PC-9 (cell line): ENCODE measurements at regions of chr20 and their contacts with region 1.

Region 1: GRCh38 chr20:62793912-62794724 is 2.2 kb upstream of the MRGBP start:
- DNase-seq: peak; percentile 80 to 97
- H3K4me3 ChIP-seq: peak overlapping the region; percentile 85
- H3K27ac ChIP-seq: peak overlapping the region; percentile 11; the same call in 1 of the 2 replicates
- H3K4me1 ChIP-seq: peaks cover 29% of the 10 kb centered on the region
- H3K27me3 ChIP-seq: no peaks in the 10 kb centered on the region
- CTCF ChIP-seq: no peak

Region 2: GRCh38 chr20:62302341-62303058 is 491.6 kb before region 1 on chr20 and contains the start of gene ADRM1:
- CTCF ChIA-PET with region 1: no interaction called
- POLR2A ChIA-PET with region 1: no interaction called
- intact Hi-C with region 1: loop called (anchors 5 kb)
- DNase-seq: peak; percentile 86 to 99
- H3K4me3 ChIP-seq: peak within 1 kb of the TSS; percentile 99
- H3K27ac ChIP-seq: peak within 1 kb of the TSS; percentile 82
- H3K4me1 ChIP-seq: peaks cover 20% of the 10 kb centered on the region
- H3K27me3 ChIP-seq: no peaks in the 10 kb centered on the region
- CTCF ChIP-seq: peak; percentile 89
- total RNA-seq, gene ADRM1: 172 and 173 TPM in 2 replicates

Region 3: GRCh38 chr20:62407221-62407992 is 386.7 kb before region 1 on chr20 and contains the start of gene CABLES2:
- CTCF ChIA-PET with region 1: no interaction called
- POLR2A ChIA-PET with region 1: no interaction called
- intact Hi-C with region 1: loop called (anchors 5 kb)
- DNase-seq: peak; percentile 85 to 96
- H3K4me3 ChIP-seq: peak within 1 kb of the TSS; percentile 72
- H3K27ac ChIP-seq: no peak within 1 kb of the TSS
- H3K4me1 ChIP-seq: peaks cover 18% of the 10 kb centered on the region
- H3K27me3 ChIP-seq: no peaks in the 10 kb centered on the region
- CTCF ChIP-seq: peak; percentile 35; the same call in 1 of the 2 replicates
- total RNA-seq, gene CABLES2: 11.2 and 14.1 TPM in 2 replicates

Region 4: GRCh38 chr20:62500237-62500864 is 293.8 kb before region 1 on chr20:
- CTCF ChIA-PET with region 1: interaction called, 4 read pairs
- POLR2A ChIA-PET with region 1: interaction called, 13 read pairs
- intact Hi-C with region 1: loop called (anchors 1 kb)
- DNase-seq: peak in 1 of 2 experiments; percentile 72
- H3K4me3 ChIP-seq: no peak overlapping the region
- H3K27ac ChIP-seq: no peak overlapping the region
- H3K4me1 ChIP-seq: no peaks in the 10 kb centered on the region
- H3K27me3 ChIP-seq: no peaks in the 10 kb centered on the region
- CTCF ChIP-seq: peak; percentile 95

Region 5: GRCh38 chr20:62623488-62624324 is 170.4 kb before region 1 on chr20:
- CTCF ChIA-PET with region 1: interaction called, 3 read pairs
- POLR2A ChIA-PET with region 1: interaction called, 13 read pairs
- intact Hi-C with region 1: loop called (anchors 2 kb)
- DNase-seq: peak; percentile 98 to 99
- H3K4me3 ChIP-seq: peak overlapping the region; percentile 80
- H3K27ac ChIP-seq: peak overlapping the region; percentile 99
- H3K4me1 ChIP-seq: peaks cover 80% of the 10 kb centered on the region
- H3K27me3 ChIP-seq: no peaks in the 10 kb centered on the region
- CTCF ChIP-seq: no peak

Region 6: DNA sequence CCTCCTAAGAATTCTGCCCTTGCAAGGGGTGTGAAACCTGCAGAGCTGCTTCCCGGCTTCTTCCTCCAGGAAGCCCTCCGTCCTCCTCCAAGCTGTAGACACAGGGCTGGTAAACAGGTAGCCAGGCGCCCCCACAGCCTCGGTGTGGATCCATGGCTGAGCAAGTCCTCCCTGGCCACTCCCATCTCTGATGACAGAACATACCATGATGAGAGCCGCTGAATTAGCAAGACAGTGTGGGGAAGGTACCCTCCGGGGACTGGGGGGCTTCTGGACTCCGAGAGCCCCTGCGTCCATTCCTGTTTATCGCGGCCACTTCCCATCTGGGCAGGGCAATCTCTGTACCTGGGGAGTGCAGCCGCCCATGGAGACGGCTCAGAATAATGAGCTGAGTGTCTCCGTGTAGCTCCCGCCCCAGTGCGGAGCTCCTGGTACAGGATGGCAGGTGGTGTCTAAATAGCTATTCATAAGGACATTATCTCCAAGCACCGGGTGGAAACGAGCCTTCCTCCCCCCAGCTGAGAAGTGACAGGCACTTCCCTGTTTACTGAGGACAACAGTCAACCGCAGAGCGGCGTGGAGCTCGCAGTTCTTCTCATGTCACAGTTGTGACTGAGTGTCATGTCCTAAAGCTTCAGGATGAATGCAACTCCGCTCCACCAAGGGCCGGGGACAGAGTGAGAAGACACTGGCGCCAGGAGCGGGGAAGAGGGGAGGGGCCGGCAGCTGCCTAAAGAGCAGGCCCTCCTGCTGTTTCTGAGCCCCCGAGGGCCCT is 108.2 kb before region 1 on chr20:
- CTCF ChIA-PET with region 1: no interaction called
- POLR2A ChIA-PET with region 1: interaction called, 4 read pairs
- intact Hi-C with region 1: loop called (anchors 5 kb)
- DNase-seq: no peak
- H3K4me3 ChIP-seq: no peak overlapping the region
- H3K27ac ChIP-seq: no peak overlapping the region
- H3K4me1 ChIP-seq: 0 out of 2 replicates have a peak, but pooled peaks cover 7% of the 10 kb centered on the region
- H3K27me3 ChIP-seq: no peaks in the 10 kb centered on the region
- CTCF ChIP-seq: no peak

Region 7: DNA sequence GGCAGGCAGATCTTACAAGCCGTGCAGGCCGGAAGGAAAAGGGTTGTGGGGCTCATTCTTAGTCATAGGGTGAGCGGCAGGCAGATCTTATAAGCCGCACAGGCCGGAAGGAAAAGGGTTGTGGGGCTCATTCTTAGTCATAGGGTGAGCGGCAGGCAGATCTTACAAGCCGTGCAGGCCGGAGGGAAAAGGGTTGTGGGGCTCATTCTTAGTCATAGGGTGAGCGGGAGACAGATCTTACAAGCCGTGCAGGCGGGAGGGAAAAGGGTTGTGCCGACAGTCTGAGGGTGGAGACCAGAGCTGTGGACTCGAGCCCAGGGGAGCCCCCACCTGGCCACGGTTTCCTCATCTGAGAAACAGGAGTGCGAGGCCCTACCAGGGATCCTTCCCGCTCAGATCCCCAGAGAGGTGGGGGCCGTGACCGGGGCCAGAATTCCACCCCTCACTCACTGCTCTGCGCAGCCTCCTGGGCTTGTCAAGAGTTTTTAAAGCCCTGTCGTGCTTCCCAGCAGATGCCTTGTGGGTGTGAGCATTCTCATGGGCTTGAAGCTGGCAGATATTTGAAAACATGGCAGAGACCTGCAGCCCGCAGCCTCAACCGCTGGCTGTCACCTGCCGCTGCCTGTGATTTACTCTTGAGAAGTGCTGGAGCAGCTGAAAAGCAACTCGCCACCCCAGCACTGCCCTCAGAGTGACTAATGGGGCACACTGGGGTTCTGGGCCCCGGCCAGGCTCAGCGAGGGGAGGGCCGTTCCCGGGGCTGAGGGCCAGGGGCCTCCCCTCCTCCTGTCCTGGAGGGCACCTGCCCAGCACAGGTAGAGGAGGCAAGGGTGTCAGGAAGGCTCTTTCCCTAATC is 53.6 kb before region 1 on chr20:
- CTCF ChIA-PET with region 1: no interaction called
- POLR2A ChIA-PET with region 1: no interaction called
- intact Hi-C with region 1: loop called (anchors 2 kb)
- DNase-seq: peak; percentile 82 to 96
- H3K4me3 ChIP-seq: peak overlapping the region; percentile 46; the same call in 1 of the 2 replicates
- H3K27ac ChIP-seq: peak overlapping the region; percentile 86
- H3K4me1 ChIP-seq: peaks cover 36% of the 10 kb centered on the region
- H3K27me3 ChIP-seq: no peaks in the 10 kb centered on the region
- CTCF ChIP-seq: no peak; the same call in 1 of the 2 replicates

Region 8: GRCh38 chr20:63272584-63273579 is 478.8 kb after region 1 on chr20 and contains the start of gene ARFGAP1:
- CTCF ChIA-PET with region 1: no interaction called
- POLR2A ChIA-PET with region 1: no interaction called
- intact Hi-C with region 1: no loop called
- DNase-seq: peak; percentile 86 to 90
- H3K4me3 ChIP-seq: peak within 1 kb of the TSS; percentile 91
- H3K27ac ChIP-seq: peak within 1 kb of the TSS; percentile 10; the same call in 1 of the 2 replicates
- H3K4me1 ChIP-seq: peaks cover 18% of the 10 kb centered on the region
- H3K27me3 ChIP-seq: no peaks in the 10 kb centered on the region
- CTCF ChIP-seq: no peak
- total RNA-seq, gene ARFGAP1: 89.0 and 101 TPM in 2 replicates